AG04449 (cell line): ENCODE measurements at regions of chr1 and their contacts with region 1.

Region 1: GRCh38 chr1:87131809-87132283 is 196.8 kb upstream of the LMO4 start:
- DNase-seq: no peak
- H3K4me3 ChIP-seq: peak overlapping the region; percentile 50
- CTCF ChIP-seq: peak; percentile 97

Region 2: GRCh38 chr1:87120779-87121178 is 11.1 kb before region 1 on chr1:
- CTCF ChIA-PET with region 1: interaction called, 17 read pairs
- POLR2A ChIA-PET with region 1: no interaction called
- DNase-seq: no peak
- H3K4me3 ChIP-seq: no peak overlapping the region
- CTCF ChIP-seq: no peak

Region 3: DNA sequence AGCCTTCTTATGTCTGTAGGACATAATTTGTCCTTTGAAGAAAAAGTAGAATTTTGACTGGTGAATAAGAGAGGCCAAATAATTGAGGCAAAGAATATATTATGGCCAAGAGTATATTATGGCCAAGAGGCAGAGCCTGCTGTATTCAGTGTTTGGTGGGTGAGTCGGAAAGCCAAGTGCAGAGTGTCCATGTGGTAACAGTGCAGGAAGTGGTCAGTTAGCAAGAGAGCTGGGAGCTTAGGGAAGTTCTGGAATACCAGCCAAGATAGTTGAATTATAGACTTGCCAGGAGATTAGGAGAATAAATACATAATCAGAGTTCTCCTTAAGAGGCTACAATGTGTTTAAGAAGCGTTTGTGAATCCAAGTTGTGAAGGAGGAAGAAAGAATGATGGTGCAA is 65.3 kb after region 1 on chr1:
- CTCF ChIA-PET with region 1: no interaction called
- POLR2A ChIA-PET with region 1: no interaction called
- DNase-seq: no peak
- H3K4me3 ChIP-seq: no peak overlapping the region
- CTCF ChIP-seq: no peak